ENCODE measurements at regions of chr11 and their contacts with region 1.

Region 1: GRCh38 chr11:60841797-60842667 is at the start of gene CCDC86:
- DNase-seq: peak; percentile 96
- total RNA-seq, gene CCDC86: 10.3 TPM

Region 2: GRCh38 chr11:60906132-60906972 is 64.3 kb after region 1 on chr11 and contains the start of gene PRPF19:
- intact Hi-C with region 1: loop called (anchors 5 kb)
- DNase-seq: peak; percentile 99
- total RNA-seq, gene PRPF19: 32.5 TPM

Region 3: GRCh38 chr11:60951899-60952741 is 110.1 kb after region 1 on chr11 and contains the start of gene SLC15A3:
- intact Hi-C with region 1: no loop called
- DNase-seq: peak; percentile 94
- total RNA-seq, gene SLC15A3: 11.6 TPM

Region 4: GRCh38 chr11:61161190-61162091 is 319.4 kb after region 1 on chr11 and contains the start of gene VPS37C:
- intact Hi-C with region 1: loop called (anchors 10 kb)
- DNase-seq: peak; percentile 96
- total RNA-seq, gene VPS37C: 19.6 TPM